CD4-positive, alpha-beta memory T cell (primary cell): ENCODE measurements at regions of chr5 and their contacts with region 1.

Region 1: GRCh38 chr5:7897014-7897632 is 28.2 kb downstream of the MTRR start:
- DNase-seq: peak in 3 of 5 donors; percentile 11 to 19 (median 11)
- H3K4me3 ChIP-seq: no peak overlapping the region
- H3K4me3 Mint-ChIP-seq: no peak overlapping the region
- H3K27ac ChIP-seq: no peak overlapping the region
- H3K27ac Mint-ChIP-seq: peak overlapping the region in 5 of 7 donors; percentile 5 to 79 (median 43)
- H3K4me1 ChIP-seq: peaks cover 6% of the 10 kb centered on the region
- H3K4me1 Mint-ChIP-seq: peaks cover 0 to 9% (median 1%) of the 10 kb centered on the region in 4 donors
- H3K27me3 ChIP-seq: no peaks in the 10 kb centered on the region
- H3K27me3 Mint-ChIP-seq: no peaks in the 10 kb centered on the region

Region 2: DNA sequence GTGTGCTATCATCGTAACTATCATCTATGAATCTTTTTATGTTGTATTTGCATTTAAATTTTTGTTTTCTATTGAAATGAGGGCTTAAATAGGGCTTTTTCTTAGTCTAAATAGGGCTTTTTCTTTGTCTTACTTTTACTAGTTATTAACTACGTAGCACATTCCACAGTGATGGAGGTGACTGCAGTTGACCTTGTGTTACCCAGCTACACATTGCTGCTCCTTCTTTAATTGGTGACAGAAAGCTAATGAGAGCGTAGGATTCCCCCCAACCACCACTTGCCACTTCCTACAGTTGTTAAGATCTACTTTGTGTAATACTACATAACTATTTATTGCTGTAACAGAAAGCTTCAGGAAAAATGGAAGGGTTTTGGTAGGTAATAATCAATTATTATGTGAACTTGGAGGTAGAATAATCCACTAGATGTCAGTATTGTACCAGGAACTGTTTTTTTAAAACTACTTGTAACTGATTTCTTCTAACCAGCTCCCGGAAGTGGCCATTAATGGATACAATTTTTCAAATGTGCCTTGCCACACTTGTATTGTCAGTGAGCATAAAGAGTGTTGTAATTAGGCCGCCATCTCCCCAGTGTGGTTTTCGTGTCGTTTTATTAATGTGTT is 10.2 kb before region 1 on chr5:
- CTCF ChIA-PET with region 1: interaction called, 10 read pairs
- POLR2A ChIA-PET with region 1: no interaction called
- intact Hi-C with region 1: no loop called
- DNase-seq: peak in 4 of 5 donors; percentile 26 to 44 (median 37)
- H3K4me3 ChIP-seq: no peak overlapping the region
- H3K4me3 Mint-ChIP-seq: no peak overlapping the region
- H3K27ac ChIP-seq: no peak overlapping the region
- H3K27ac Mint-ChIP-seq: peak overlapping the region in 4 of 7 donors; percentile 10 to 50 (median 23)
- H3K4me1 ChIP-seq: no peaks in the 10 kb centered on the region
- H3K4me1 Mint-ChIP-seq: peaks cover 4 to 13% (median 8%) of the 10 kb centered on the region in 4 donors
- H3K27me3 ChIP-seq: no peaks in the 10 kb centered on the region
- H3K27me3 Mint-ChIP-seq: no peaks in the 10 kb centered on the region

Region 3: GRCh38 chr5:7927466-7928375 is 30.6 kb after region 1 on chr5:
- CTCF ChIA-PET with region 1: no interaction called
- POLR2A ChIA-PET with region 1: no interaction called
- intact Hi-C with region 1: no loop called
- DNase-seq: peak in 4 of 5 donors; percentile 13 to 25 (median 18)
- H3K4me3 ChIP-seq: no peak overlapping the region
- H3K4me3 Mint-ChIP-seq: no peak overlapping the region
- H3K27ac ChIP-seq: no peak overlapping the region
- H3K27ac Mint-ChIP-seq: no peak overlapping the region
- H3K4me1 ChIP-seq: no peaks in the 10 kb centered on the region
- H3K4me1 Mint-ChIP-seq: peaks cover 0 to 5% (median 2%) of the 10 kb centered on the region in 4 donors
- H3K27me3 ChIP-seq: no peaks in the 10 kb centered on the region
- H3K27me3 Mint-ChIP-seq: peaks cover 5 to 15% of the 10 kb centered on the region in 2 donors